CD4-positive, alpha-beta memory T cell (primary cell): ENCODE measurements at regions of chr7 and their contacts with region 1.

Region 1: GRCh38 chr7:103573479-103574058 is 127.6 kb upstream of the SLC26A5 start:
- DNase-seq: peak in 4 of 5 donors; percentile 12 to 33 (median 22)
- H3K4me3 ChIP-seq: no peak overlapping the region
- H3K4me3 Mint-ChIP-seq: no peak overlapping the region
- H3K27ac ChIP-seq: no peak overlapping the region
- H3K27ac Mint-ChIP-seq: no peak overlapping the region
- H3K4me1 ChIP-seq: no peaks in the 10 kb centered on the region
- H3K4me1 Mint-ChIP-seq: no peaks in the 10 kb centered on the region
- H3K27me3 ChIP-seq: no peaks in the 10 kb centered on the region
- H3K27me3 Mint-ChIP-seq: peaks cover 8 to 12% of the 10 kb centered on the region in 2 donors

Region 2: DNA sequence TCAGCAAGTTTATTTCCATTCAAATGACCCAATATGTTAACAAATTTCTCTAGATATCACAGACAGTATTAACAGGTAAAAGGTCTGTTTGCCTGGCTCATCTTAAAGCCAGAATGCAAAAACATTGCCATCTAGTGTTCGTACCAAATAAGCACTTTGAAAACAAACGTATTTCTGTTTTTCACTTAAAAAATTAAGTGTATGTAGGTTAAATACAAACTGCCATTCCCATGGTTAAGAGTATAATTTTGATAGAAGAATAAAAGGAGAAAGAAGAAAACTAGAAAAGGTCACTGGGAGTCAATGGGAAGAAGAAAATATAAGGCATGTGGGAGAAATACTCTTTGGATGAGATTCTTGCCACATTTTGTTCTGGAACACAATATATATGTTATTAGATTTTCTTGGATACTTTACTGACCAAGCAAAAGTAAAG is 583.3 kb after region 1 on chr7:
- CTCF ChIA-PET with region 1: interaction called, 3 read pairs
- POLR2A ChIA-PET with region 1: no interaction called
- intact Hi-C with region 1: loop called (anchors 2 kb)
- DNase-seq: peak in 3 of 5 donors; percentile 4 to 9 (median 6)
- H3K4me3 ChIP-seq: no peak overlapping the region
- H3K4me3 Mint-ChIP-seq: no peak overlapping the region
- H3K27ac ChIP-seq: no peak overlapping the region
- H3K27ac Mint-ChIP-seq: no peak overlapping the region
- H3K4me1 ChIP-seq: no peaks in the 10 kb centered on the region
- H3K4me1 Mint-ChIP-seq: peaks cover 0 to 4% (median under 1%) of the 10 kb centered on the region in 4 donors
- H3K27me3 ChIP-seq: no peaks in the 10 kb centered on the region
- H3K27me3 Mint-ChIP-seq: no peaks in the 10 kb centered on the region

Region 3: DNA sequence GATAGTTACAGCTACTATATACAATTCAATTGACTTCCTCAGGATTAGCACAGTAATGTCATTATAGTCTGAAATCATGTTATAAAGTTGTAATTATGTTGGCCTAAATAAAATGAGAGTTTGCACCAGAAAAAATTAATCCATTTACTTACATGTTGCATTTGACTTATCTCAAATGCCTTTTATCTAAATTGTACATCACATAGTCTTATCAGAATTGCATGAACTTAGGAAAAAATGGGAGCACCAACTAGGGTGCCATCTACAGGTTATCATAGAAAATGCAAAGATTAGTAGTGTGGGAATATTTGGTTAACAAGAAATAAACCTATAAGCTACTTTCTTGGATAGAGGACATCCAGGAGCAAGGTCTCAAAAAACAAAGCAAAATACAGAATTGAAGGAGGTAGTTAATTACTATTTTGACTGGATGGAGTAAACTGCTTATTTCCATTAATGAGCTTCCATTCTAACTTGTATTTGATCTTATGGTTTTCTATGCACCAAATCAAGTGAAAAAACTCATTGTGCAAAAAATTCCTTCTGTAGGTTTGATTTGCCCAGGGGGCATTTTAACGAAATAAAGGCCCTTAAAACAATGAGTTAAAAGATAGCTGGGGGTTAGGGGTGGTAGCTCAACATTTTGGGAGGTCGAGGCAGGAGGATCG is 694.3 kb after region 1 on chr7:
- CTCF ChIA-PET with region 1: interaction called, 4 read pairs
- POLR2A ChIA-PET with region 1: no interaction called
- intact Hi-C with region 1: loop called (anchors 5 kb)
- DNase-seq: no peak
- H3K4me3 ChIP-seq: no peak overlapping the region
- H3K4me3 Mint-ChIP-seq: no peak overlapping the region
- H3K27ac ChIP-seq: no peak overlapping the region
- H3K27ac Mint-ChIP-seq: no peak overlapping the region
- H3K4me1 ChIP-seq: no peaks in the 10 kb centered on the region
- H3K4me1 Mint-ChIP-seq: no peaks in the 10 kb centered on the region
- H3K27me3 ChIP-seq: no peaks in the 10 kb centered on the region
- H3K27me3 Mint-ChIP-seq: peaks cover 5 to 6% of the 10 kb centered on the region in 2 donors

Region 4: DNA sequence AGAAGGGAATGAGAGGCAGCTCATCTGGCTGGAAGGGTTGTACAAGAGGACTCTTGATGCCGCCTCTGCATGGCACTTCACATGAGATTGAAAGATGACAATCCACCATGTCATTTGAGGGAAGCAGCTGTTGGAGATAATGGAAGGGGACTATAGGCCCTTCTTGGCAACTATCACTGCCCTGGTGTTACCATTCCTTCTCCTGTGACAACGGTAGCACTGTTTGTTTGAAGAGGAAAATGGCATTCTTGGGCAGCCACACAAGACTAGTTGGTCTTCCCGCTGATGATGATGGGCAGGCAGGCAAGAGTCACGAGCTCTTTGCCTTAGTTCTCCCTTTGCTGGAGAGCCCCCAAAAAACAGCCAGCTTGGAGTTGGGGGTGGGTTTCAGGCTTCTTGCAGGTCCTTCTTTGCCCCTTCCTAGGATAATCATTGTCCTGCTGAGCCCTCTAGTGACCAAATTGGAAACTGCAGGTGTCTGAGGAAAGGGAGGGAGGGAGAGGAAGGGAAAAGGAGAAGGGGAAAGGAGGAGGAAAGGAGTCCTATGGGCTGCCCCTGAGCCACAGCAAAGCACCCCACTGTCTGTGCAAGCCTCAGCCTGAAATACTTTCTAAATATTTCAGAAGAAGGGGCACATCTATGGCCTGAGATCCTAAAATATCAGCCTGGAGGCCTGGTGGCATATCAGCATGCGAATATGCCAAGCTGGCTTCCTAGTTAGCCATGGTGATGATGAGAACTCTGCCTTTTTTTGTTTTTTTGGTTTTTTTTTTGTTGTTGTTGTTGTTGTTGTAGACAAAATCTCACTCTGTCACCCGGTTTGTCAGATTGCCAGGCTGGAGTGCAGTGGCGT is 1274.8 kb after region 1 on chr7:
- CTCF ChIA-PET with region 1: interaction called, 18 read pairs
- POLR2A ChIA-PET with region 1: no interaction called
- intact Hi-C with region 1: no loop called
- DNase-seq: peak; percentile 26 to 46 (median 36)
- H3K4me3 ChIP-seq: no peak overlapping the region
- H3K4me3 Mint-ChIP-seq: no peak overlapping the region
- H3K27ac ChIP-seq: no peak overlapping the region
- H3K27ac Mint-ChIP-seq: no peak overlapping the region
- H3K4me1 ChIP-seq: no peaks in the 10 kb centered on the region
- H3K4me1 Mint-ChIP-seq: no peaks in the 10 kb centered on the region
- H3K27me3 ChIP-seq: no peaks in the 10 kb centered on the region
- H3K27me3 Mint-ChIP-seq: peaks cover 19 to 20% of the 10 kb centered on the region in 2 donors